Panc1 (cell line): ENCODE measurements at regions of chr14 and their contacts with region 1.

Region 1: DNA sequence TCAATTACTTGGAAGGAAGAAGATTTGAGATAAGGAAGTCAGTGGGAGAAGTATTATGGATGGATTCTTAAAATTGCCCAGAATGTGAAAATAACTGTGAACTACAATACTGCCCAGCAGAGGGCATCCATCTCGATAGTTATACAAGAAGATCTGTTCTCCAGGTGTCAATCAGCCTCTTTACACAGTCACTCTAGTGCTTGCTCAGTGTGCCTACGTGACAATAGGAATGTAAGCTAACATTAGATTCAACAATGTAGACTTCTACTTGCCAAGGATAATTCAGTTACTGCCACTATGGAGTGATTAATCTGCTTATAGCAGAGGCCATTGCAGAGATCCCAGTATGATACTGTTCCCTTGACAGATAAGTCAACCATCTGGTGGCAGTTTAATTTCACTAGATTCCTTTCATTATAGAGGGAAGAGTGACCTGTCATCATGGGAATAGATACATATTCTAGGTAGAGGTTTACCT is 10.6 kb upstream of the MAP4K5 start:
- DNase-seq: no peak
- ATAC-seq: peak; percentile 73
- H3K4me3 ChIP-seq: no peak overlapping the region
- H3K27ac ChIP-seq: no peak overlapping the region
- H3K4me1 ChIP-seq: no peaks in the 10 kb centered on the region
- H3K27me3 ChIP-seq: no peaks in the 10 kb centered on the region
- CTCF ChIP-seq: peak; percentile 49

Region 2: DNA sequence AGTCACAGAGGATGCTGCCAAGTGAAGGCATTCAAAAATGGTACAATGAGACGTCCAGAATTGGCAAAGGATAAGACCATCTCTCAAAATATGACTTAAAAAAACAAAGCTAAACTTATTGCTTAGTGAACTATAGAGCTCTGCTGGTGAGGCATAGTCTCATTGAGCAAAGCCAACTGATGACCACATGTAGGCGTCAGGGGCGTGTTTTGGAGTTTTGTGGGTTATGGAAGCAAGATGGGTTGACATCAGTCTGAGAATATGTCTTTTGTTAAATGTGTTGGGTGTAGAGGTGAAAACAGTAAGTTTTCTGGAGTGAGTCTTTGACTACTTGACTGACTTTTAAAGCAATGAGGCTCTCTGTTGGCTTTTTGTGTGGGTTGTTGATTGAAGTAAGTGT is 64.2 kb after region 1 on chr14:
- CTCF ChIA-PET with region 1: interaction called, 10 read pairs
- POLR2A ChIA-PET with region 1: no interaction called
- in situ Hi-C with region 1: no loop called
- intact Hi-C with region 1: no loop called
- DNase-seq: no peak
- ATAC-seq: no peak
- H3K4me3 ChIP-seq: no peak overlapping the region
- H3K27ac ChIP-seq: no peak overlapping the region
- H3K4me1 ChIP-seq: no peaks in the 10 kb centered on the region
- H3K27me3 ChIP-seq: no peaks in the 10 kb centered on the region; the same call in 1 of the 2 replicates
- CTCF ChIP-seq: no peak